Gastrocnemius medialis (tissue), 4 donors: ENCODE measurements at regions of chr1 and their contacts with region 1.

Region 1: DNA sequence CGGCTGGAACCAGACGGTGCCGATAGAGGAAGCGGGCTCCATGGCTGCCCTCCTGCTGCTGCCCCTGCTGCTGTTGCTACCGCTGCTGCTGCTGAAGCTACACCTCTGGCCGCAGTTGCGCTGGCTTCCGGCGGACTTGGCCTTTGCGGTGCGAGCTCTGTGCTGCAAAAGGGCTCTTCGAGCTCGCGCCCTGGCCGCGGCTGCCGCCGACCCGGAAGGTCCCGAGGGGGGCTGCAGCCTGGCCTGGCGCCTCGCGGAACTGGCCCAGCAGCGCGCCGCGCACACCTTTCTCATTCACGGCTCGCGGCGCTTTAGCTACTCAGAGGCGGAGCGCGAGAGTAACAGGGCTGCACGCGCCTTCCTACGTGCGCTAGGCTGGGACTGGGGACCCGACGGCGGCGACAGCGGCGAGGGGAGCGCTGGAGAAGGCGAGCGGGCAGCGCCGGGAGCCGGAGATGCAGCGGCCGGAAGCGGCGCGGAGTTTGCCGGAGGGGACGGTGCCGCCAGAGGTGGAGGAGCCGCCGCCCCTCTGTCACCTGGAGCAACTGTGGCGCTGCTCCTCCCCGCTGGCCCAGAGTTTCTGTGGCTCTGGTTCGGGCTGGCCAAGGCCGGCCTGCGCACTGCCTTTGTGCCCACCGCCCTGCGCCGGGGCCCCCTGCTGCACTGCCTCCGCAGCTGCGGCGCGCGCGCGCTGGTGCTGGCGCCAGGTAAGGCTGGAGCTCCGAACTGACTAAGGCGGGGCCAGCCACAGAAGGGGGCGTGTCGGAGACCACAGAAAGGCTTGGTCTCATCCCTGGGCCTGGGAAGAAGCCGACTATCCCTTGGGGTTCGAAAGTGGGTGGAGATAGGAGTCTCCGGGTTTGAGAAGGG is 486 bp downstream of the SLC27A3 start:
- DNase-seq: no peak
- ATAC-seq: peak; percentile 38 to 43
- H3K4me3 ChIP-seq: peak overlapping the region; percentile 60 to 72 (median 68)
- H3K27ac ChIP-seq: peak overlapping the region; percentile 65 to 75 (median 70)
- H3K4me1 ChIP-seq: peaks cover 32 to 45% of the 10 kb centered on the region in 2 donors
- H3K27me3 ChIP-seq: no peaks in the 10 kb centered on the region
- CTCF ChIP-seq: no peak
- POLR2A ChIP-seq: no peak

Region 2: DNA sequence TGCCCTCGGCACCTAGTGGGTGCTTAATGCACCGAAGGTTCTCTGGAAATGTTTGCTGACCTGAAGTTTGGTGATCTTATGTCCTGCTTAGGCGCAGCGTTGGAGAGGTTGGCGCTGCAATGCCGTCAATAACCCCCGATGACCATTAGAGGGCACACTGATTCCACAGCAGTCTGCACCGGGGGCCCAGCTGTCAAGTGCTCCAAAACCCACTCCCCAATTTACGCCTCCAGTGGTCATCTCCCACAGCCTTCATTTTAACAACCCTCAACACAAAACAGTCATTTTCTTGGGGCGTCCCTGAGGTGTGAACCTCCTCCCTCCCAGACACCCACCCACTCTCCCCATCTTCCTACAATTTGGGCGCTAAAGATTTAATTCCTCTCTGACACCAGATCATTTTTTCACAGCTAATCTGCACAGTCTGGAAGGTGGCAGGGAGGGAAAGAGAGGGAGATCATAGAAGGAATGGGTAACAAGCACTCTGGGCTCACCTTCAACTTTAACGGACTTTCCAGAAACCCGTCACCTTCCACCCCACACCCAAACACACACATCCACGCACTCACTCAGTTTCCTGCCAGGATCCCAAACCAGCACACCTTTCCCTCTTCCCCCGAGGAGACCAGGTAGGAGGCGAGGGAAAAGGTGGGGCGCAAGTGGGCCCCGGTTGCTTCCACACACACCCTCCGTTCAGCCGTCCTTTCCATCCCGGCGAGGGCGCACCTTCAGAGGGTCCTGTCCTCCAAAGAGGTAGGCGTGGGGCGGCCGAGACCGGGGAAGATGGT is 97.8 kb before region 1 on chr1:
- in situ Hi-C with region 1: loop called in 1 of 4 experiments (anchors 10 kb)
- intact Hi-C with region 1: loop called (anchors 2 kb)
- DNase-seq: peak in 1 of 2 donors; percentile 22
- ATAC-seq: peak; percentile 58 to 73
- H3K4me3 ChIP-seq: peak overlapping the region; percentile 45 to 70 (median 59)
- H3K27ac ChIP-seq: peak overlapping the region; percentile 16 to 57 (median 52)
- H3K4me1 ChIP-seq: peaks cover 9 to 16% of the 10 kb centered on the region in 2 donors
- H3K27me3 ChIP-seq: peaks cover 20 to 27% (median 22%) of the 10 kb centered on the region in 3 donors
- CTCF ChIP-seq: peak; percentile 82 to 93 (median 84)
- POLR2A ChIP-seq: no peak